Astrocyte of the cerebellum (primary cell): ENCODE measurements at regions of chr20 and their contacts with region 1.

Region 1: DNA sequence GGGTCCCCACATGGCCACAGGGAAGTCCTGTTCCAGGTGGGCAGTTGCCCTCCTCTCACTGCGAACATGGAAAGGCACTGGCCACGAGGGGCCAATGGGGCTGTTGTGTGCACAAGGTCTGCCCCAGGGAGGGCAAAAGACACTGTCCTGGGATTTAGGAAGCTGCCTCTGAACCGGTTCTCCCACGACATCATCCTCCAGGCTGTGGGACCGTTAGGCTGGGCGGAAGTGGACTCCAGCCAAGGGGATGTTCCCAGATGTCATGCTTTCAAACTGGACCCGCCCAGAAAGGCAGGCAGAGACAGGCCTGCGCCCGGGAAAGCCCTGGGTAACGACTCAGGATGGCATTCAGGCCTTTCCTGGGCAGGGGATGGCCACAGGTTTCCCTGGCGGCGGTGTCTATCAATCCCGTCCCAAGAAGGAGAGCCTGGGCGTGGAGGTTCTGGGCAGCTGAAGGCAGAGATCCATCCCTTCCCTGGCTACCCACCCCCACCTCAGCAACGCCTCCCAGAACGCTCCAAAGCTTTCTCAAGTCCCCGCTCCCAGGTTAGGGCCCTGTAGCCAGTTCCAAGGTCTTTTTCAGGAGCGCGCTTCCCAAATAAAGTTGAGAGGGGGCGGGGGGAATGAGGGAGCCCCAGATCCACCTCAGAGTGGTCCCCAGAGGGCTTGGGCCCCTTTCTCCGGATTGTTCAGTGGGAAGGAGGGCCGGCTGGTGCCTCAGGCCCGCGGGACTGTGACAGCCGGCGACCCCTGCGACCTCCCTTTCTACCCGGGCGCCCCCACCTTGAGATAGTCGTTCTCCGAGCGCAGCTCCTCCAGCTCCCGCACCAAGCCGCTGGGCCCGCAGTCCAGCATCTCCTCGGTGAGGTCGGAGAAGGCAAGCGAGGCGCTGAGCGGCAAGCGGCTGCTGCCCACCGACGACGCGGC is 13.8 kb upstream of the TLDC2 start:
- DNase-seq: no peak
- H3K4me3 ChIP-seq: peak overlapping the region; percentile 63
- CTCF ChIP-seq: no peak

Region 2: DNA sequence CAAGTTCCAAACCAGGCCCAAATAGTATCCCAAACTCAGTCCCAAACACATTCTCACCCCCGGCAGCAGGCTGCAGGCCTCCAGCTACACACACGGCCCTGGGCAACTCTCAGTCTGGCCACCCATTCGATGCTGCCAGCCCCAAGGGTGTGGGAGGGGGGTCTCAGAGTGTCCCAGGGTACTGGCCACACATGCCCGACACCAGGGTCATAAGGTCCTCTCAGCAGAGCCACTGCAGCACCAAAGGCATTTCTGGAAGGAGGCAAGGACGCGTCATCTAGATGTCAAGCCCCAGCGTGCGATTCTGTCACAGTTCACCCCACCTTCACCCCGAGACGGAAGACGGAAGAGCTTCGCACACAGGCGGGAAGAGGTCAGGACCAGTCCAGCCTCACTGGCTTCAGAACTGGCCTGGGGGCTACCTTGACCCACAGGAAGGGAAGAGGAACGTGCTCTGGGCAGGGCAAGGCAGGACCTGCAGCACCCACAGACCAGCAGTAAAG is 311.3 kb before region 1 on chr20:
- in situ Hi-C with region 1: loop called (anchors 10 kb)
- DNase-seq: no peak
- H3K4me3 ChIP-seq: no peak overlapping the region
- CTCF ChIP-seq: no peak

Region 3: GRCh38 chr20:36808317-36809257 is 53.6 kb before region 1 on chr20:
- in situ Hi-C with region 1: loop called (anchors 10 kb)
- DNase-seq: no peak
- H3K4me3 ChIP-seq: no peak overlapping the region
- CTCF ChIP-seq: peak; percentile 78

Region 4: DNA sequence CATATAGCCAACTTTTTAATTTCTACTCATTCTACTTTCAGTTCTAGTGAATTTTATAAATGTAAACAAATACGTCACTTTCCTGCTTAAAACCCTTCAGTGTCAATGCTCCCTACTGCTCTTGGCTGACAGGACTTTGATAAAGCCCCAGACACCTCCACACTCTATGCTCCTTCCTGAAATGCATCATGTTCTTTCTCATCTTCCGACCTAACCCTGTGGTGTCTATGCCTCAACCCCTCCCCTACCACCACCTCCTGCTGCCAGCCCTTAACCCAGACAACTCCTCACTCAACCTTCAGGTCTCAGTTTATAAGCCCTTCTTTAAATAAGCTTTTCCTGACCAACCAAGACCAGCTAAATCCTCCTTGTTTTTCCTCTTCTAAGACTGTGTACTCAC is 32.9 kb after region 1 on chr20:
- in situ Hi-C with region 1: loop called (anchors 5 kb)
- DNase-seq: no peak
- H3K4me3 ChIP-seq: no peak overlapping the region
- CTCF ChIP-seq: no peak